Uterus (tissue), 4 donors: ENCODE measurements at regions of chr9 and their contacts with region 1.

Region 1: DNA sequence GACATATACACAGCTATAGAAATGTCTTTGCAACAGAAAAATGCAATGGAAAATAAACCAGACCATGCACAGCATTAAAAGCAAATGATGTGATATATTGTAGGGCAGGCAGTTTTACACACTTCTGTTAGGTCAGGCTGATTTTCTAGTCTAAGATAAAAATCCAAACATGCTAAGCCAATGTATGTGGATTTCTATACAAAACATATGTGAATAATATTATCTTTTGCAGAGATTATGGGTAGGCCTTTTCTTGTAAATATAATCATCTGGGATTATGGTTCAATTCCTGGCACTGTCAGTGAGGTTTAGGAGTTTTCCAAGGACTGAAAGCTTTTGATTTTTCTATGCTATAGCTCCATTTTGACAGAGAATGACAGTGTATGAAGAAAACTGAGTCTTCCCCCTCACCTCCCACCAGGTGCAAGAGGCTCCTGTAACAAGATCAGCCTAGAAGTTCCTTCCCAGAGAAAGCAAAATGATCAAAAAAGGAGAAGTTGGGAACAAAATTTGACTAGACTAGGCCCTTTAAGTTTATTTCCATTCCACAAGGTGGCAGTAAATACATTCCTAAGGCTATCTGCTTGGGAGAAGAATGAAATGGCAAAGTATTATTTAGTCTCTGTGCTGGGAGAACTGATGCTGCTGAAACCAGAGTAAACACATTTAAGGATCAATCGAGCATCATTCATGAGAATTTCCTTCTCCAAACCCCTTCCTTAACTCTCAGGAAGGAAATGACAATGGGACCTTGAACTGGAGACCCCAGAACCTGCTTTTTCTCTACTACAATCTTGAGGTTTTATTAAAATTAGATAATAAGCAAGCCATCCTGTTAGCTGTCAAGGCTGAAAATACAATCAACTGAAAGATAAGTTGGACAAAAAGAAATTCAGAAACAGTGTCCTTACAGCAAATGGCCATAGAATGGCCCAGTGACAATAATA is 133.0 kb upstream of the TUT7 start:
- DNase-seq: no peak
- H3K4me3 ChIP-seq: no peak overlapping the region
- H3K27ac ChIP-seq: peak overlapping the region; percentile 69 to 71
- H3K4me1 ChIP-seq: no peaks in the 10 kb centered on the region
- H3K27me3 ChIP-seq: no peaks in the 10 kb centered on the region
- CTCF ChIP-seq: peak; percentile 63 to 80 (median 69)
- POLR2A ChIP-seq: no peak

Region 2: GRCh38 chr9:86222667-86223066 is 264.5 kb before region 1 on chr9:
- intact Hi-C with region 1: no loop called
- DNase-seq: no peak
- H3K4me3 ChIP-seq: no peak overlapping the region
- H3K27ac ChIP-seq: no peak overlapping the region
- H3K4me1 ChIP-seq: no peaks in the 10 kb centered on the region
- H3K27me3 ChIP-seq: no peaks in the 10 kb centered on the region
- CTCF ChIP-seq: no peak
- POLR2A ChIP-seq: no peak

Region 3: DNA sequence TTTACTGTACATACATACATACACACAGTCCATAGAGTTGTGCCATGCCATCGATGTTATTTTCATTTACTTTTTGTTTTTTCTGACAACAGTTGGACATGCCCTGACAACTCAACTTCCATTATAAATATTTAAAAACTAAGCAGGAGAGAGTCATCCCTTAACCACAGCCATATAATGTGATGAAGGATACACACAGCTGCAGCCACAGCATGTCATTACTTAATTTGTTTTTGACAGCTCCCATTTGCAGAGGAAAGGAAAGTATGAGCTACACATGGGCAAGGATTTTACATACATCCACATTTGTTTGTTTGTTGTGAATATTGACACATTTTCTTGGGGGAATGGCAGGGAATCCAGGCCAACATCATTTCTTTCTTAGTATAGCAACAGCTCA is 41.5 kb before region 1 on chr9:
- intact Hi-C with region 1: no loop called
- DNase-seq: no peak
- H3K4me3 ChIP-seq: no peak overlapping the region
- H3K27ac ChIP-seq: no peak overlapping the region
- H3K4me1 ChIP-seq: no peaks in the 10 kb centered on the region
- H3K27me3 ChIP-seq: no peaks in the 10 kb centered on the region
- CTCF ChIP-seq: no peak
- POLR2A ChIP-seq: no peak

Region 4: DNA sequence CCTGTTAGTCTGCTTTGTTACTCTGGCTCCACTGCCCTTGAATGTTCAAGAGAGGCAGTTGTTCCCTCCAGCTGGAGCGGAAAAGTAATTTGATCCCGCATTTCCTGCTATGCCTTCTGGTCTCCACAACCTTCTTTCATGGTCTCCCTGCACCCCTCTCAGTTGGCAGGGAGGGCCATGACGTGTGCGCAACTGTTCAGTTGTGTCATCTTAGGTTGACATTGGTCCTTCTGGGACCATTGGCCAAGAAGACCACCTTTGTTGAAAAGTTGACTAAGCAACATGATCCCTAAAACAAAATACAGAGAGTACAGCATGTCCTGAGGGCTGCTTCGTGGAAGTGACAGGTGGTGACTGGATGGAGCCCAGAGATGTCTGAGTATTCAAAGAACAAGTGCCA is 59.5 kb after region 1 on chr9:
- intact Hi-C with region 1: no loop called
- DNase-seq: no peak
- H3K4me3 ChIP-seq: no peak overlapping the region
- H3K27ac ChIP-seq: no peak overlapping the region
- H3K4me1 ChIP-seq: peaks cover 0 to 3% of the 10 kb centered on the region in 2 donors
- H3K27me3 ChIP-seq: no peaks in the 10 kb centered on the region
- CTCF ChIP-seq: no peak
- POLR2A ChIP-seq: no peak

Region 5: GRCh38 chr9:86614871-86615849 is 128.0 kb after region 1 on chr9:
- intact Hi-C with region 1: no loop called
- DNase-seq: no peak
- H3K4me3 ChIP-seq: no peak overlapping the region
- H3K27ac ChIP-seq: peak overlapping the region; percentile 11 to 22
- H3K4me1 ChIP-seq: no peaks in the 10 kb centered on the region
- H3K27me3 ChIP-seq: no peaks in the 10 kb centered on the region
- CTCF ChIP-seq: peak in 1 of 4 experiments; percentile 16
- POLR2A ChIP-seq: no peak

Region 6: DNA sequence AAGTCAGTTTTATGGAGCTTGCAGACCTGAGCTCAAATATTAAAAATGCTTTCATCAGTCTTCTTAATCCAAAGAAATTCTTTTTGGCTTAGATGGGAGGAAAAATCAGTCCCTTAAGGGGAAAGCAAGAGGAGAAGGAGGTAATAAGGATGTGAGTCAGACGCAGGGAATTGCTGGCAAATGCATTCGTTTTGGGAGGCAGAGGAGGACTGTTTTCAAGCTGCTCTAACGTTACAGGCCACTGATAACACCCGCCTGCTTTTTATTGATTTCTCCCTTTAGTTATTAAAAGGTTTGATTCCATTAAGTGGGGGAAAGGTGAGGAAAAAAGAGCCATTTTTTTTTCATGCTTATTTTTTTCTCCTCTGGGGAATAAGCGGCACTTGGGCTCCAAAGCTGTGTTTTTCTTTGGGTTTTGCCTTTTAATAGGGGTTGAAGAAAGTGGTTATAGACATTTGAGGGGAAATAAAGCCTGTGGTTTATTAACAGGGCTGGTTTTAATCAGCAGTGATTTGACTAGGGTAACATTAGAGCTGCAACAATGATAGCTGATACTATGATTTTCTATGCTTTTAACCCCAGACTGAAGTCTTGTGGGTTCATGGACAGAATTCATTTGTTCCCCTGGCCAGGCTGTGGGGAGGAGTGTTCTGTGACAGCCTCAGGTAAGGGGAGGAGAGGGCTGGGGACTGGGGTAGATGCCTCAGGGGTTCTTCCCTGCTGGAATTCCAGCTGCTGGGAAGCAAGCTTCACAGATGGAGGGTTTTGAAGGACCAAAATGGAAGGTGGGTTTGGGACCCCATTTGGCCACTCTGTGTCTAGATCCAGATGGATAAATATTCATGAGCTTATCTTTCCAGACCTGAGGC is 234.9 kb after region 1 on chr9:
- intact Hi-C with region 1: loop called (anchors 10 kb)
- DNase-seq: peak; percentile 73 to 86
- H3K4me3 ChIP-seq: no peak overlapping the region
- H3K27ac ChIP-seq: peak overlapping the region; percentile 84 to 94
- H3K4me1 ChIP-seq: peaks cover 6 to 10% of the 10 kb centered on the region in 2 donors
- H3K27me3 ChIP-seq: no peaks in the 10 kb centered on the region
- CTCF ChIP-seq: no peak
- POLR2A ChIP-seq: no peak

Region 7: DNA sequence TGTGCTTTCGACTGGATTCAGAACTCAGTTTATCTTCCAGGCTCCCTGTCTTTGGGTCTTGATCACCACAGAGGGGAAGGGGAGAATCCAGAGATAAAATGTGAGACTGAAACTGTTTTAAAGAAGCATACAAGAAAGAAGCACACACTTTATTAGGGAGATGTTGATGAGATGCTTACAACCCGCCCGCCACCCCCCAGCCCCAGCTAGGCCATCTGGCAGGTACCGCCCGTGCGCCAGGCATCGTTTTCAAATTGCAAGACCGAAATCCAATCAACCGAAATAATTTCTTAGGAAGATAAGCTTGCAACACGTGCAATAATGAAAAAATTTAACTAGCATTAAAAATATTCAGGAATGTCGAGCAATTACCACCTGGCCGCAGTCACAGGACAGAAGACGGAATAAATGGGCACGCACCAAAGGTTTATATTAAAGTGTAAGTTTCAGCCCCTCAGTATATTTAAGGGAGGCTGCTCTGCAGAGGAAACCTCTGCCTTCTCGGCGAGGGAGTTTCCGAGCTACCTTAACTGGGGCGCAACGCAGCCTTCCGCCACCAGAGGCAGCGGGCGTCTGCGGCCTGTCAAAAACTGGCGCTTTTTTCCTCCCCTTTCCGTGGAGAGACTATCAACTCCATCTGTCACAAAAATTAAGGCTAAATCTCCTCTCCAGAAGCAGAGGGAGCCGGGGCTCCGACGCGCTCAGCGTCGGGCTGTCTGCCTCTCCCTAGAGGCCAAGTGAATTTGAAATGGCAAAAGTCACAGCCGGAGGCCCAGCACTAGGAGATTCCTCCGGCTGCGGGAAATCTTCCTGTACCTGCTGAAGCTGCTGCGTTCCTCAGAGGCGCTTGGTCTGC is 461.1 kb after region 1 on chr9:
- intact Hi-C with region 1: loop called (anchors 5 kb)
- DNase-seq: peak; percentile 83 to 87
- H3K4me3 ChIP-seq: peak overlapping the region; percentile 57 to 93
- H3K27ac ChIP-seq: peak overlapping the region; percentile 93 to 96
- H3K4me1 ChIP-seq: no peaks in the 10 kb centered on the region
- H3K27me3 ChIP-seq: no peaks in the 10 kb centered on the region
- CTCF ChIP-seq: peak; percentile 70 to 98 (median 87)
- POLR2A ChIP-seq: peak in 1 of 2 donors; percentile 45